AG04450 (cell line): ENCODE measurements at regions of chr5 and their contacts with region 1.

Region 1: GRCh38 chr5:173670176-173670651 is 53.8 kb upstream of the BOD1 start:
- DNase-seq: no peak
- H3K4me3 ChIP-seq: no peak overlapping the region
- H3K27ac ChIP-seq: no peak overlapping the region
- H3K27me3 ChIP-seq: peaks cover 25% of the 10 kb centered on the region
- CTCF ChIP-seq: no peak

Region 2: DNA sequence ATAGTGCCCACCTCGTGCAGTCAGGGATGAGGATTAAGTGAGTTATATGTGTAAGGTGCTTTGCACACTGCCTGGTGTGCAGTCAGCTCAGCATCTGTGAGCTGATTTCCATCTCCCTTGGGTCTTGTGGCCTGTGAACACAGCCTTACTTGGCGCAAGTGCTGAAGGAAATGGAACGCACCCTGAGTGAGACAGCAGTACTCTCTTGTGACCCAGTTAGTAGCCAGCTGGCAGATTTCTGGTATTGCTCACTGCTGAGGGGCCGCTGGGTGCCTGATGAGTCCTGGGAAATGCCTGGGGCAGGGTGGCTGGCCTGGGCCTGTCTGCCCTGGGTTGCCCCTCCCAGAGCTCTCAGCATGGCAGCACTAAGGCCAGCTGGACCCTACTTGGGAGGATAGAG is 37.2 kb after region 1 on chr5:
- CTCF ChIA-PET with region 1: no interaction called
- POLR2A ChIA-PET with region 1: no interaction called
- DNase-seq: no peak
- H3K4me3 ChIP-seq: no peak overlapping the region
- H3K27ac ChIP-seq: no peak overlapping the region
- H3K27me3 ChIP-seq: peaks cover 4% of the 10 kb centered on the region
- CTCF ChIP-seq: no peak

Region 3: GRCh38 chr5:174311531-174312269 is 641.5 kb after region 1 on chr5:
- CTCF ChIA-PET with region 1: interaction called, 10 read pairs
- POLR2A ChIA-PET with region 1: no interaction called
- DNase-seq: no peak
- H3K4me3 ChIP-seq: peak overlapping the region; percentile 47
- H3K27ac ChIP-seq: no peak overlapping the region
- H3K27me3 ChIP-seq: peaks cover 13% of the 10 kb centered on the region
- CTCF ChIP-seq: peak; percentile 75